ENCODE measurements at regions of chr12 and their contacts with region 1.

Region 1: DNA sequence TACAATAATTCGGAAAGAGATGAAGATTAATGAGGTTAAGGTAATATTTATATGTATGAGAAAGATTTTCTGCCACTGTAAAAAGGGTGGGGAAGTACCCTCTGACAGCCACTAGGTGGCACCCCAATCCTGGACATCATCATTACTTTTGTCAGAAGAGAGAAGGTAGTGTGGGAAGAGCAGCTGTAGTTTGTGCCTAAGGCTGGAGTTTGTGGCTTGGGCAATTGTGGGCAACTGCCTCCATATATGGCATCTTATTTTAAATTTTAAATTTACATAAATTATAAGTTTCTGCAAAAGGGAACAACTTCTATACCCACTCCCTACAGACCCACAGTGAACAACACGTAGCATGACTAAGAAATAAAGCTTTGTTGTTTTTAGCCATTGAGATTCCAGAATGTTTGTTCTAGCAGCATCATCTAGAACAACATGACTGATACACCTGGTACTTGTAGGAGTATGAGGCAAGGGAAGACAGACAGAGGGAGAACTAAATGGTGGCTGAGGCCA is 34.4 kb upstream of the SYCP3 start:
- DNase-seq: peak; percentile 78
- CTCF ChIP-seq: peak; percentile 89

Region 2: GRCh38 chr12:101097829-101098580 is 675.7 kb before region 1 on chr12:
- CTCF ChIA-PET with region 1: no interaction called
- POLR2A ChIA-PET with region 1: no interaction called
- DNase-seq: no peak
- CTCF ChIP-seq: no peak

Region 3: GRCh38 chr12:101470939-101471338 is 302.8 kb before region 1 on chr12:
- CTCF ChIA-PET with region 1: no interaction called
- POLR2A ChIA-PET with region 1: no interaction called
- DNase-seq: no peak
- CTCF ChIP-seq: no peak

Region 4: GRCh38 chr12:101552277-101552676 is 221.4 kb before region 1 on chr12:
- CTCF ChIA-PET with region 1: no interaction called
- POLR2A ChIA-PET with region 1: no interaction called
- DNase-seq: no peak
- CTCF ChIP-seq: no peak

Region 5: GRCh38 chr12:101792051-101792931 is 18.6 kb after region 1 on chr12:
- CTCF ChIA-PET with region 1: interaction called, 25 read pairs
- POLR2A ChIA-PET with region 1: no interaction called
- DNase-seq: no peak
- CTCF ChIP-seq: peak; percentile 31

Region 6: DNA sequence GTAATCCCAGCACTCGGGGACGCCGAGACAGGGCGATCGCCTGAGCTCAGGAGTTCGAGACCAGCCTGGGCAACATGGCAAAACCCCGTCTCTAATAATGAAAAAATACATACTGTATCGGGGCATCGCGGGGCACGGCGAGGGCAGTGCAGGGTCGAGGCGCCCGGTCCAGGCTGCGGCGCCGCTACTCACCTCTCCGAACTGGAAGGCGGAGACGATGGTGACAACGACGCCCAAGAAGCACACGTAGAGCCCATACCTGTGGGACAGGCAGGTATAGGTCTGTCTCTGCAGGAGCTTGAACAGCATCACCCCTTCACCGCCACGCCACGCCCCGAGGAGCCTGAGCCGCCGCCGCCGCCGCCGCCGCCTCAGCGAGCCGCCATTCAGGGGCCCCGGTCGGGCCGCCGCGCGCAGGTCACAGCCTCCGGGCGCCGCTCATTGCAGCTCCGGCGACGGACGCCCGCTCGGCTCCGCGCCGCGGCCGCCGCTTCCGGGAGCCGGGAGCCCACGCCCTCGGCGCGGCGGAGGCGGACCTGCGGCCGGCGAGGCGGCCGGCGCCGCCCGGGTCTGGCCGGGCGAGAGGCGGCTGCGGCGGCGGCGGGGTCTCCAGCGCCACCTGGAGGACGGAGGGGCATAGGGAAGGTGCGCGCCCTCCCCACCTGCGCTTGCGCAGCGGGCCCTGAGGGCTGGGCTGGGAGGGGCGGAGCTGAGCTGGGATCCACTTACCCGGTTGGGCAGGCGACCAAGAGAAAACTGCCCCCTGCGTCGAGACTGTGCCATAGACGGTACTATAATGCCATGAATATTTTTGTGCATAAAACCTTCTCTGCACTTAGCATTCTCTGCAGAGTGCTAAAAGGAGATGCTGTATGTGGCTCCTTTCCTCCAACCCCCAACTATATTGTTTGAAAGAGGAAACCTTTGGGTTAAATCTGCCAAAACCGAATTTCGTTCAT is 56.9 kb after region 1 on chr12 and contains the start of gene GNPTAB:
- CTCF ChIA-PET with region 1: interaction called, 96 read pairs
- POLR2A ChIA-PET with region 1: no interaction called
- DNase-seq: peak; percentile 96
- CTCF ChIP-seq: peak; percentile 89

Region 7: DNA sequence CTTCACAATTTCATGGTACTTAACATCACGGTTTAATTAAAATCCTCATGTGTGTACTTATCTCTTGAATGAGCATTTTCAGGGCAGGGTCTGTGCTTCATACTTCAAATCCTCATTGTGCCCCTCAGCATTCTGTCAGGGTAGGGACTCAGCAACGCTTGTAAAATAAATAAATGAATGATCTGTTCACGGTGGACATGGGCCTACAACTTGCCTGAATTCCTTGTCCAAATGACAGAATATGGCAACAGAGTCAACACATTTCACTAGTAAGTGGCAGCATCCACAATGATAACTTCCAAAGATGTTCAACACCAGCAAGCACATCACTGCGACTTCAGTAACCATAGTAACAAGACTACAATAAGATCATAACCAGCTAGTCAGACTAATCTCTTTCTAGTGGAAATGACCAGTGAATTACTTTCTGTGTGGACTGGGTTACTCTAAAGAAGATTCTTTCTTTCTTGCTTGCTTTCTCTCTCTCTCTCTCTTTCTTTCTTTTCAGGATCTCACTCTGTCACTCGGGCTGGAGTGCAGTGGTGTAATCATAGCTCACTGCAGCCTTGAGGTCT is 71.5 kb after region 1 on chr12:
- CTCF ChIA-PET with region 1: interaction called, 53 read pairs
- POLR2A ChIA-PET with region 1: no interaction called
- DNase-seq: no peak
- CTCF ChIP-seq: no peak

Region 8: GRCh38 chr12:101870925-101871324 is 97.2 kb after region 1 on chr12:
- CTCF ChIA-PET with region 1: no interaction called
- POLR2A ChIA-PET with region 1: no interaction called
- DNase-seq: no peak
- CTCF ChIP-seq: no peak